ENCODE measurements at regions of chr6 and their contacts with region 1.

Region 1: DNA sequence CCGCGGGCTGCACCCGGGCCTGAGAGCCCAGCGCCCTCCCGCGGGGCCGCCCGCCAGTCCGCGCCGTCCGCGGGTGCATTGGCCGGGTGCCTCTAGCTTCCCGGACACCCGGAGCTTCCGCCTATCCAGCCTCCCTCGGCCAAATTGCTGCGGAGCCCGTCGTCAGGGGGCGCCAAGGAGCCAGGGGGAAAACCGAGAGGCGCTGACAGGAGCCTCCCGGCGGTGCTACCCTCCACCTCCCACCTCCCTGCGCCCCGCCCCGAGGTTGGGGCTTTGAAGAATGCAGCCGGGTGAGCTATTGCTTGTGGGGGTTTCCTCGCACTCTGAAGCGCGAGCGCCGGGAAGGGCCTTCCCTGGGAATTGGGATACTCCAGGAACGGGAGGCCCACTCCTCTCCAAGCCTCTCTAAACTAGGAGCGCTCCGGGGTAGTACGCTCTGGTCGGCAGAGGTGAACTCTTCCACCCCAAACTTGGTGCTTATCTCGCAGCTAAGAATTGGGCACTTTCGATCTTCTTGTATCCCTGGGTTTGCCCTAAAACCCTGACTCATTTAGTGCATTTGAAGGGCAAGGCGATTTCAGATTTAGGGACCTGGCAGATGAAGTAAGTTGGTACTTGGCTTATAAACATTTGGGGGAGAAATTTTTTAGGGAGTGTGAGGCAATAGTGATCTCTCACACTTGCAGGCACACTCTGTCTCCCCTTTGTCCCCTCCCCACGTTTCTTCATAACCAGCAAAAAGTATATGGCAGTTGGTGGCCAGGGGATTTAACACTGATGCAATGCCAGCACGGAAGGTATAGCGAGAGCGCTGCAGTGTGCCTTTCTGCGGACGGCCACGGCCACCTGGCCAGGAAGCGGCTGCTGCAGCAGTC is 501 bp downstream of the BEND6 start:
- DNase-seq: peak; percentile 86 to 95 (median 87)
- ATAC-seq: peak; percentile 90
- H3K4me3 ChIP-seq: peak overlapping the region; percentile 69
- H3K27ac ChIP-seq: peak overlapping the region; percentile 72
- H3K4me1 ChIP-seq: peaks cover 13 to 20% of the 10 kb centered on the region in 2 experiments; a peak in 4 of 5 replicates
- H3K27me3 ChIP-seq: no peaks in the 10 kb centered on the region
- CTCF ChIP-seq: peak; percentile 87 to 96 (median 96)
- EP300 ChIP-seq: no peak; the same call in 1 of the 2 replicates
- POLR2A ChIP-seq: peak; percentile 51; the same call in 1 of the 2 replicates
- RAD21 ChIP-seq: peak; percentile 80 to 82

Region 2: DNA sequence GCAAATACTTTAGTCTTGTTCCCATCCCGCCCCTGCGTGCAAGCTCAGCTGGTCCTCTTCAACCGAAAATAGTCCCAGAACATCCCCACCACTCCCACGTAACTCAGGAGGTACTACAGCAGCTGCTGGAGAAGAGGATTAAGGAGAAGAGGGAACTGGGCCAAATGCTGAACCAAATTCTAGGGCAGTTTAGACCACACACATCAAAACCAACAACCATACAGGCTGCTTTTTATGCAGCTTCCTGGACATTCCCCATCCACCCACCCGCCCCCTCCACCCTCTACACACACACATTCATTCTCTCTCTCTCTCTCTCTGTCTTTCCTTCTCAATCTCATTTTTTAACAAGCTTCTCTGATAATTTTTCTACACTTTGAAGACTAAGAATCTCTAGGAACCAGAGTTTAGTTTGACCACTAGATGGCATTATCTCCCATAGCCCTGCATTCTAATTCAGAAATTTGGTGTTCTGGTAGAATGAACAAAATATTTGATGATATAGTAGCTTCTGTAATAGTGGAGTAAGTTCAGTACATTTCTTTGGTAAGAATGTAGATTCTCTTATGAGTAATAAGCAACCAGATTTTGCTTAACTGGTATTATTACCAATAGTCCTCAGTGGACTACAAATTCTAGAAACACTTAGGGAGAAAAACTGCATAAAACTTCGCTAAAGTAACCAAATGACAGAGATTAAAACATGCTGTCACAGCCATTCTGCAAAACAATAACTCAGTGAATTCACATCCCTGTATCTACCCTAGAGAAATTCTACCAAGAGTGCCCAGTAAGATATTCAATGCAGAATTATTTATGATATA is 52.6 kb before region 1 on chr6:
- CTCF ChIA-PET with region 1: interaction called, 14 read pairs
- POLR2A ChIA-PET with region 1: interaction called, 4 read pairs
- in situ Hi-C with region 1: no loop called
- intact Hi-C with region 1: loop called (anchors 1 kb)
- DNase-seq: peak; percentile 24 to 47 (median 35)
- ATAC-seq: peak; percentile 70
- H3K4me3 ChIP-seq: no peak overlapping the region
- H3K27ac ChIP-seq: no peak overlapping the region
- H3K4me1 ChIP-seq: peaks cover 0 to 4% of the 10 kb centered on the region in 2 experiments; a peak in 2 of 5 replicates
- H3K27me3 ChIP-seq: no peaks in the 10 kb centered on the region
- CTCF ChIP-seq: peak in 2 of 3 experiments; percentile 53 to 81; a peak in 4 of 6 replicates
- EP300 ChIP-seq: no peak
- POLR2A ChIP-seq: no peak
- RAD21 ChIP-seq: peak; percentile 56 to 73

Region 3: DNA sequence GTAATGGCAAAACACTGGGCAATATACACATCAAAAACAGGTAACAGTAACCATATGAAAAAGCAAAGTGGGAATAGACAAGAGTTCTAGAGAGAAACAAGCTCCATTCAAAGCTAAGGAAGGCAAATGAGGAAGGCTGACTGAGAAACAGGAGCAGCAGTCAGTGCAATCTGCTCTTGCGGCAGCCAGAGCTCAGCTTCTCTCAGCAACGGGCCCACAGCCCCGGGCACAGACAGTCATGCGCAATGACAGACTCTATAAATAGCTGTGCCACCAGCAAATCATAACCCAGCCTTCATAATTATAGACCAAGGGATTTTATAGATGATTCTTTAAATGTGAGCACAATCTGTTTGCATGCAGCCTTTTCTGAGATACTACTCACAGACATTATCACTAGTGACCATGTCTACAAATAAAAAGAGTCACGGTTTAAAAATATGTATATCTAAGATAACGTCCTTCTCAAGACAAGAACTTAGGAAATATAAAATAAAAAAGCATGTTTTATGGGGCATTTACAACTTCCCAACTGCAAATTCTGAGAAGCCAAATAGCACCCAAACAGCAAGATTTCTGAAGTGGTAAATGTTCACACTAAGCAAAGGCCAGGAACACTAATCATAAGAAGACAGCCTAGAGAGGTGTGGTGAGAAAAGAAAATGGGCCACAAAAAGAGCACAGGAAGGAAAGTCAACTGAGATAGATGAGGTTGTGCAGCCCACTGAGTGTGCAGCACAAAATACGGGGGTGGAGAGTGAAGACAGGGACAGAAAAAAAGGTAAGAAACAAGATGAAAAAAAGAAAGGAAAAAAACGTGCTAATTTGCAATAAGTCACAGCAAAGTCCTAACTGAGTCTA is 40.4 kb before region 1 on chr6:
- CTCF ChIA-PET with region 1: no interaction called
- POLR2A ChIA-PET with region 1: interaction called, 3 read pairs
- in situ Hi-C with region 1: no loop called
- intact Hi-C with region 1: loop called (anchors 2 kb)
- DNase-seq: peak in 1 of 4 experiments; percentile 41
- ATAC-seq: peak; percentile 63
- H3K4me3 ChIP-seq: no peak overlapping the region
- H3K27ac ChIP-seq: no peak overlapping the region
- H3K4me1 ChIP-seq: peaks cover 4 to 26% of the 10 kb centered on the region in 2 experiments; a peak in 4 of 5 replicates
- H3K27me3 ChIP-seq: no peaks in the 10 kb centered on the region
- CTCF ChIP-seq: no peak
- EP300 ChIP-seq: peak; percentile 42; the same call in 1 of the 2 replicates
- POLR2A ChIP-seq: no peak
- RAD21 ChIP-seq: no peak

Region 4: GRCh38 chr6:57021086-57021720 is 65.8 kb after region 1 on chr6:
- CTCF ChIA-PET with region 1: interaction called, 3 read pairs
- POLR2A ChIA-PET with region 1: no interaction called
- in situ Hi-C with region 1: no loop called
- intact Hi-C with region 1: loop called (anchors 2 kb)
- DNase-seq: peak; percentile 33 to 56 (median 42)
- ATAC-seq: peak; percentile 76
- H3K4me3 ChIP-seq: no peak overlapping the region
- H3K27ac ChIP-seq: no peak overlapping the region
- H3K4me1 ChIP-seq: peaks cover 8 to 16% of the 10 kb centered on the region in 2 experiments; a peak in 4 of 5 replicates
- H3K27me3 ChIP-seq: no peaks in the 10 kb centered on the region
- CTCF ChIP-seq: peak; percentile 24 to 51 (median 47); a peak in 4 of 6 replicates
- EP300 ChIP-seq: no peak
- POLR2A ChIP-seq: no peak
- RAD21 ChIP-seq: peak in 1 of 2 experiments; percentile 41; a peak in 3 of 4 replicates

Measured in K562 (cell line).